Endothelial cell of umbilical vein (primary cell): ENCODE measurements at regions of chr9 and their contacts with region 1.

Region 1: DNA sequence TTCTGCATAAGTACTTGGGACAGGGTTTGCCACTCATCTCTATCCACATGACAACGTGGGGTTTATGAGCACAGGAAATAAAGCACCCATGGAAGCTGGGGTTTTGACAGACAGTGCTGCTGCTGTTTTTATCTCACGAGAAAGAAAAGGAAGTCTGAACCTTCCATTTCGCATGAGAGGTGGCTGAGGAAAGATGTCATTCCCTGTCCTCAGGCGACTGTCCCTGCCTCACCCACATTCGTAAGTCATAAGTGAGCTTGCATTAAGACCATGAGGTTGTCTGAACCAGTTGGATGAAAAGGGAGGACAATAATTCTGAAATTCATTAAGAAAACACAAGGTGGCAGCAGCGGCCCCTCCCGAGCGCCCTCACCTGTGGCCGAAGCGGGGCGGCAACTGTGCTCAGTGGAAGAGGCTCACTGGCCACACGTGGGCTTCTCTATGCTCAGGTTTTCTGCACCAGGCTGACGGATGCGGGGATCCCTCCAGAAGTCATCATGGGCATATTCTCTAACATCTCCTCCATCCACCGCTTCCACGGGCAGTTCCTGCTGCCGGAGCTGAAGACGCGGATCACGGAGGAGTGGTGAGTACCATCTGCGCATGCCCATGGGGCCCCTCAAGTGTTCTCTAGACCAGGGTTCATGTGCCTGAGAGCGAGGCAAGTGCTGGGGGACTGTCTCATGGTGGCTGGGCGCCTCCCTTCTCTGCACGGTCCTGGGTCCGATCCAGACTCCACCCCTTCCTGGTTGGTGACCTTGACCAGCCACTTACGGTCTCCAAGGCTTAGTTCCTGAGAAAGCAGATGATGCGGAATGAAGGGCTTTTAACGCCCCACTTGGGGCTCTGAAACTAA is 54.7 kb upstream of the SUSD3 start:
- DNase-seq: peak; percentile 59
- H3K4me3 ChIP-seq: no peak overlapping the region
- H3K27ac ChIP-seq: no peak overlapping the region
- H3K4me1 ChIP-seq: no peaks in the 10 kb centered on the region
- H3K27me3 ChIP-seq: peaks cover 0 to 4% of the 10 kb centered on the region in 2 experiments
- CTCF ChIP-seq: peak; percentile 62 to 69
- POLR2A ChIP-seq: no peak

Region 2: DNA sequence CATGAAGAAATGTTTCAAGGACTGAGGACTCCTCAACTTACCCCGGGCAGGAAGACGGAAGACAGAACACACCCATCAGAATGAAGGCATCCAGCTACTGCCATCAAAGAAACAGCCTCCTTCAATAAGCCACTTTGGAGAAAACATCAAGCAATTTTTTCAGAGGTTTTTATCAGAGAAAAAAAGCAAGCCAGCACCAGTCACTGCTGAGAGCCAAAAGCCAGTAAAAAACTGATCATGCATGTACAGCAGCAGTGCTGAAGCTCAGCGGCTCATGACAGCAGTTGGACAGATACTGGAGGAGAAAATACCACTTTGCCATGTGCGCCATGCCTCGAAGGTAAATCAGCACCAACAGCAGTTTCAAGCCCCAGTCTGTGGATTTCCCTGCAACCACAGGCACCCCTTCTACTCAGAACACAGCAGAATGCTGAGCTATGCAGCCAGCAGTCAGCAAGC is 115.9 kb before region 1 on chr9:
- CTCF ChIA-PET with region 1: no interaction called
- POLR2A ChIA-PET with region 1: no interaction called
- dilution Hi-C with region 1: no loop called
- intact Hi-C with region 1: no loop called
- DNase-seq: no peak
- H3K4me3 ChIP-seq: no peak overlapping the region
- H3K27ac ChIP-seq: no peak overlapping the region
- H3K4me1 ChIP-seq: no peaks in the 10 kb centered on the region
- H3K27me3 ChIP-seq: peaks cover 0 to 2% of the 10 kb centered on the region in 2 experiments
- CTCF ChIP-seq: no peak
- POLR2A ChIP-seq: no peak

Region 3: DNA sequence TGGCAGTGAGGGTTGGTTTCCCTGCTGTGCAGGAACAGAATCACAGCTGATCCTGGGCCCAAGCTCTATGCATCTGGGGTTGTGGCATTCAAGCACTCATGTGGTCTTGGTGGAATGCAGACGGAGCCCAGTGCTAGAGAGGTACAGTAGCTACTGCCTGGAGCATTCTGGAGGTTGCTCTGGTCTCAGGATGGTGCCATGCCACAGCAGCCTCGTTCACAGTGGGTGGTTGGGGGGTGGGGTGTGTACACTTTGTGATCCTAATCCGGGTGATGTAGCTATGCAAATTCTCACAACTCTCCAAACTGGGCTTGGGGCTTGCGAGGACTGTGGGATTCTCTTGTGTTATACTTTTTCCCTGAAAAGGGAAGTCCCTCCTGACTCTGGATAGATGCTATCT is 11.2 kb before region 1 on chr9:
- CTCF ChIA-PET with region 1: interaction called, 27 read pairs
- POLR2A ChIA-PET with region 1: no interaction called
- dilution Hi-C with region 1: no loop called
- intact Hi-C with region 1: no loop called
- DNase-seq: no peak
- H3K4me3 ChIP-seq: no peak overlapping the region
- H3K27ac ChIP-seq: no peak overlapping the region
- H3K4me1 ChIP-seq: no peaks in the 10 kb centered on the region
- H3K27me3 ChIP-seq: no peaks in the 10 kb centered on the region
- CTCF ChIP-seq: no peak
- POLR2A ChIP-seq: no peak

Region 4: DNA sequence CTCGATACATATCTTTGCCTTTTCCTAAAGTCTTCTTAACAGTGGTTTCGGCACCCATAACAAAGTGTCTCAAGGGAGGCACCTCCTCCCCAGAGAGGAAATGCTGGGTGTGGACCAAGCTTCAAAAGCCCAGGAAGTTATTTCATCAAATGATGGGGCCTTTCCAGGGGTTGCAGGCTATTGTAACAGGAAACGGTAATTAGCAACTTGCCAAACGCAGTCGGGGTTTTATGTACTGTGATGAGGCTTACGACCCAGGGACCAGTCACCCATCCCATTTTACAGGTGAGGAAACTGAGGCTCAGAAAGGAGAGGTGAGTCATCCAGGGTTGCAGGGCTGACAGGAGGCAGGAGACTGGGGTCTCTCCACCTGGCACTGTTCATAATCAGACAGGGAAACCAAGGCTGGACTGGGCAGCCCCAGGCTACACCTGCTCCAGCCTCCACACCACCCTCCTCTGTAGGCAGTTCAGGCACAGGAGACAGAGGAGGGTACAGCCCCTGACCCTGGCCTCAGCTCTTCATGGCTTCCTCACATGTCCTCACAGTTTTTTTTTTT is 24.7 kb after region 1 on chr9:
- CTCF ChIA-PET with region 1: interaction called, 15 read pairs
- POLR2A ChIA-PET with region 1: interaction called, 3 read pairs
- dilution Hi-C with region 1: no loop called
- intact Hi-C with region 1: no loop called
- DNase-seq: no peak
- H3K4me3 ChIP-seq: no peak overlapping the region
- H3K27ac ChIP-seq: no peak overlapping the region
- H3K4me1 ChIP-seq: no peaks in the 10 kb centered on the region
- H3K27me3 ChIP-seq: no peaks in the 10 kb centered on the region
- CTCF ChIP-seq: no peak
- POLR2A ChIP-seq: no peak

Region 5: DNA sequence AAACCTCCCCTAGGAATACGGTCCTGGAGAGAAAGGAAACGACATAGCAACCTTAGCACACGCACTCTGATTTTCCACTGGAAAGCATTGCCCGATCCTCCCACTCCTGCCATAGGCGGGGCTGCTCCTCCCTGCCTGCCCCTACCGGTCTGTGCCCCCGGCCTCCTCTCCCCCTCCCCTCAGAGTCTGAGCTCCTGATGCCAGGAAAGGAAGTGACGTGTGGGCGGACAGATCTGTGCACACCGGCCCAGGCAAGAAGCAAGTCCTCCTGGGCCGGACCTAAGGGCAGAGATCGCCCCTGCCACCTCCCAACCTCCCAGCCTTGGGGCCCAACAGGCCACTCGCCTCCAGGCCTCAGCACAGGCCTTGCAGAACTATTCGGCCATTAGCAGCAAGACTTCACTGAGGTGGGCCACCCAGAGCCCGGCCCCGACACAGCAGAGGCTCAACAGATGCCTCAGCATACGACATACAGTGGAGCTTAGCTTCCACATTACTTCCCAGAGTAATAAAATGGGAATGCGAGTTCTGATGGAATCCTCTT is 123.1 kb after region 1 on chr9:
- CTCF ChIA-PET with region 1: interaction called, 11 read pairs
- POLR2A ChIA-PET with region 1: no interaction called
- dilution Hi-C with region 1: no loop called
- intact Hi-C with region 1: no loop called
- DNase-seq: peak; percentile 50
- H3K4me3 ChIP-seq: no peak overlapping the region
- H3K27ac ChIP-seq: peak overlapping the region; percentile 31
- H3K4me1 ChIP-seq: peaks cover 50% of the 10 kb centered on the region
- H3K27me3 ChIP-seq: no peaks in the 10 kb centered on the region
- CTCF ChIP-seq: no peak
- POLR2A ChIP-seq: no peak

Region 6: GRCh38 chr9:93302551-93303257 is 298.9 kb after region 1 on chr9:
- CTCF ChIA-PET with region 1: interaction called, 81 read pairs
- POLR2A ChIA-PET with region 1: no interaction called
- dilution Hi-C with region 1: no loop called
- intact Hi-C with region 1: loop called (anchors 1 kb)
- DNase-seq: peak; percentile 44
- H3K4me3 ChIP-seq: no peak overlapping the region
- H3K27ac ChIP-seq: no peak overlapping the region
- H3K4me1 ChIP-seq: no peaks in the 10 kb centered on the region
- H3K27me3 ChIP-seq: no peaks in the 10 kb centered on the region
- CTCF ChIP-seq: peak; percentile 53 to 82
- POLR2A ChIP-seq: no peak